ENCODE measurements at regions of chr16 and their contacts with region 1.

Region 1: GRCh38 chr16:7101054-7101453 is 231.6 kb upstream of the RBFOX1 start:
- DNase-seq: no peak
- H3K4me3 ChIP-seq: no peak overlapping the region
- H3K27ac ChIP-seq: no peak overlapping the region
- H3K4me1 ChIP-seq: no peaks in the 10 kb centered on the region
- H3K27me3 ChIP-seq: no peaks in the 10 kb centered on the region
- CTCF ChIP-seq: no peak

Region 2: GRCh38 chr16:7161891-7162290 is 60.8 kb after region 1 on chr16:
- CTCF ChIA-PET with region 1: interaction called, 28 read pairs
- dilution Hi-C with region 1: loop called (anchors 5 kb)
- in situ Hi-C with region 1: no loop called
- intact Hi-C with region 1: no loop called
- DNase-seq: no peak
- H3K4me3 ChIP-seq: no peak overlapping the region
- H3K27ac ChIP-seq: no peak overlapping the region
- H3K4me1 ChIP-seq: no peaks in the 10 kb centered on the region
- H3K27me3 ChIP-seq: no peaks in the 10 kb centered on the region
- CTCF ChIP-seq: no peak